Gastrocnemius medialis (tissue), 4 donors: ENCODE measurements at regions of chr1 and their contacts with region 1.

Region 1: GRCh38 chr1:202501281-202501680 is 152.8 kb downstream of the PPP1R12B start:
- DNase-seq: no peak
- ATAC-seq: no peak
- H3K4me3 ChIP-seq: no peak overlapping the region
- H3K27ac ChIP-seq: no peak overlapping the region
- H3K4me1 ChIP-seq: peaks cover 12 to 16% of the 10 kb centered on the region in 2 donors
- H3K27me3 ChIP-seq: no peaks in the 10 kb centered on the region
- CTCF ChIP-seq: peak; percentile 31 to 50 (median 42)
- POLR2A ChIP-seq: no peak

Region 2: DNA sequence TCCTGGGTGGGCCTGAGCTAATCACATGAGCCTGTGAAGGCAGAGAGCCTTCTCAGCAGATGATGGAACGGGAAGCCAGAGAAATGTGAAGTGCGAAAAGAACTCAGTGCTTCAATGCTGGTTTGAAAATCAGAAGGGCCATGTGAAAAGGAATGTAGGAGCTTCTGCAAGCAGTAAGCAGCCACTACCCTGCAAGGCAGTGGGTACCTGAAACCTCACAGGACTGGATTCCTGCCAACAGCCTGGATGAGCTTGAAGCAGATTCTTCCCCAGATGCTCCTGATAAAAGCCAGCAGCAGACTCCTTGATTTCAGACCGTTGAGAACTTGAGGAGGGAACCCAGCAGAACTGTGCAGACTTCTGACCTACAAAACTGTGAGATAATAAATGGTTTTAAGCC is 50.4 kb after region 1 on chr1:
- in situ Hi-C with region 1: no loop called
- intact Hi-C with region 1: no loop called
- DNase-seq: no peak
- ATAC-seq: no peak
- H3K4me3 ChIP-seq: no peak overlapping the region
- H3K27ac ChIP-seq: peak overlapping the region in 3 of 4 donors; percentile 5 to 15 (median 10)
- H3K4me1 ChIP-seq: peaks cover 24 to 48% of the 10 kb centered on the region in 2 donors
- H3K27me3 ChIP-seq: no peaks in the 10 kb centered on the region
- CTCF ChIP-seq: no peak
- POLR2A ChIP-seq: no peak

Region 3: GRCh38 chr1:202571347-202572339 is 70.4 kb after region 1 on chr1:
- in situ Hi-C with region 1: no loop called
- intact Hi-C with region 1: loop called (anchors 5 kb)
- DNase-seq: no peak
- ATAC-seq: peak in 1 of 2 donors; percentile 17
- H3K4me3 ChIP-seq: no peak overlapping the region
- H3K27ac ChIP-seq: peak overlapping the region in 2 of 4 donors; percentile 2 to 6
- H3K4me1 ChIP-seq: peaks cover 21 to 55% of the 10 kb centered on the region in 2 donors
- H3K27me3 ChIP-seq: no peaks in the 10 kb centered on the region
- CTCF ChIP-seq: peak; percentile 33 to 70 (median 58)
- POLR2A ChIP-seq: no peak

Region 4: DNA sequence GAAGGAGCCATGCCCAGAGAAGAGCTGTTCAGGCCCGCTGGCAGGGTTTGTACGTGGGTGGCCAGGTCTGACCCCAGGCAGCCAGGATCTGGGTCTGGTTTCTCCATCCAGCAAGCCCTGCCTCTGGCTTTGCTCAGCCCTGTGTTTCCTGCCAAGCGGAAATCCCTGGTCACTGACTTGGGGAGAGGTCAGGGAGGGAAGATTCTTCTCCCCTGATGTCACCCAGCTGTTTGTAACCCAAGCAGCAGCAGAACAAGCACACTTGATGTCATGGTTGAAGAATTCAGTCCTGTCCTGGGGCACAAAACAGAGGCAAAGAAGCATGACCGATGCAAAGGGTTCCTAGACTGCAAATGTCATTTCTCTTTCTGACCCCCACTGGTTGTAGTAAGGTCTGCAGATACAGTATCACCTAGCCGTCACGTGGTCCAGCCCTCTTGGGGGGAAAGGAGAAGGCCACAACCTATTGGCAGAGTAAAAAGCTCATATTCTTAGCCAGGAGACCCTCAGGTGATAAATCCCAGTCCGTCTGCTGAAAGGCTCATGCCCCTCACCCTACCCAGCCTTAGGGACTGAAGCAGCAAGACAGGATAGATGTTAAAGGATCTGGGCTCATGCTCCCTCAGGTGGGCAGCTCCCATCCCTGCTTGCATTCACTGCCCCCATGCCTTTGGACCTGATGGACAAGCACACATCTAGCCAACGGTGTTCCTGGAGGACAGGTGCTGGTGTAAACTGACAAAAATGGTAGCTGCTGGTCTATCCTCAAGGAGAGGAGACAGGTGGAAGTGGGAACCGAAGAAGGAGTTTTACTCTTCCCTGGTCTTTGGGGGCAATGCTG is 88.1 kb after region 1 on chr1:
- in situ Hi-C with region 1: loop called in 2 of 4 experiments (anchors 10 kb)
- intact Hi-C with region 1: loop called (anchors 2 kb)
- DNase-seq: peak; percentile 90 to 95
- ATAC-seq: peak; percentile 95 to 96
- H3K4me3 ChIP-seq: no peak overlapping the region
- H3K27ac ChIP-seq: peak overlapping the region; percentile 77 to 90 (median 82)
- H3K4me1 ChIP-seq: peaks cover 70 to 71% of the 10 kb centered on the region in 2 donors
- H3K27me3 ChIP-seq: no peaks in the 10 kb centered on the region
- CTCF ChIP-seq: no peak
- POLR2A ChIP-seq: no peak

Region 5: DNA sequence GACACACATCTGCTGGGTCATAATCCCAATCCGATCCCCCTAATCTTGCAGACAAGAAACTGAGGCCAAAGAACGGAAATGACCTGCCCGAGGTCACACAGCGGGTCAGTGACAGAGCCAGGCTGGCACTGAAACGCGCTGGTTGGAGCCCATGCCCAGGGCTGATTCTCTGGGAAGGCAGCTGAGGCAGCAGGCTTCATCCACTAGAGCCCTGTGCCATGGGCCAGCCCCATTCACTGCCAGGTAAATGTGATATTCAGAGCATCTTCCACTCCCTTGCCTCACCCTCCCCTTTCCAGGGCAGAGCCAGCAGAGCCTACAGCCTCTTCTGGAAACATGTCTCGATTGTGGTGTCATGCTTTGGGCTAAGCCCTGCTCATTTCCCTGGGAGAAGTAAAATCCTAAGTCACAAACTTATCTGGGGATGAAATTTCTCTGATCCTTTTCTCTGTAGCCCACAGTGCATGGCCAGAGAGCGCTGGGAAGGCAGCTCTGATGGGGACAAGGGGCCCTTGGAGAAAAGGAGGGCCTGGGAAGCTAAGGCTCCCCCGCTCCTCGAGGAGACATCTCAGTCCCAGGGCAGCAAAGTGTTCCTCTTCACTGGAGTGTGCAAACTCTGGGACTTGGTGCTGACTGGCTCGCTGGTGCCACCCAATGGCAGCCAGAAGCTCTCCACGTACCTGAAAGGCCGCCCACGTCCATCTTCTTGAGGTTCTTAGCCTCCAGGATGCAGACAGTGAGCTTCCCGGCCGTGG is 98.6 kb after region 1 on chr1:
- in situ Hi-C with region 1: loop called in 2 of 4 experiments (anchors 10 kb)
- intact Hi-C with region 1: no loop called
- DNase-seq: peak; percentile 37 to 42
- ATAC-seq: peak; percentile 57 to 71
- H3K4me3 ChIP-seq: no peak overlapping the region
- H3K27ac ChIP-seq: no peak overlapping the region
- H3K4me1 ChIP-seq: peaks cover 0 to 3% of the 10 kb centered on the region in 2 donors
- H3K27me3 ChIP-seq: no peaks in the 10 kb centered on the region
- CTCF ChIP-seq: peak in 4 of 5 experiments; percentile 32 to 71 (median 59)
- POLR2A ChIP-seq: no peak

Region 6: DNA sequence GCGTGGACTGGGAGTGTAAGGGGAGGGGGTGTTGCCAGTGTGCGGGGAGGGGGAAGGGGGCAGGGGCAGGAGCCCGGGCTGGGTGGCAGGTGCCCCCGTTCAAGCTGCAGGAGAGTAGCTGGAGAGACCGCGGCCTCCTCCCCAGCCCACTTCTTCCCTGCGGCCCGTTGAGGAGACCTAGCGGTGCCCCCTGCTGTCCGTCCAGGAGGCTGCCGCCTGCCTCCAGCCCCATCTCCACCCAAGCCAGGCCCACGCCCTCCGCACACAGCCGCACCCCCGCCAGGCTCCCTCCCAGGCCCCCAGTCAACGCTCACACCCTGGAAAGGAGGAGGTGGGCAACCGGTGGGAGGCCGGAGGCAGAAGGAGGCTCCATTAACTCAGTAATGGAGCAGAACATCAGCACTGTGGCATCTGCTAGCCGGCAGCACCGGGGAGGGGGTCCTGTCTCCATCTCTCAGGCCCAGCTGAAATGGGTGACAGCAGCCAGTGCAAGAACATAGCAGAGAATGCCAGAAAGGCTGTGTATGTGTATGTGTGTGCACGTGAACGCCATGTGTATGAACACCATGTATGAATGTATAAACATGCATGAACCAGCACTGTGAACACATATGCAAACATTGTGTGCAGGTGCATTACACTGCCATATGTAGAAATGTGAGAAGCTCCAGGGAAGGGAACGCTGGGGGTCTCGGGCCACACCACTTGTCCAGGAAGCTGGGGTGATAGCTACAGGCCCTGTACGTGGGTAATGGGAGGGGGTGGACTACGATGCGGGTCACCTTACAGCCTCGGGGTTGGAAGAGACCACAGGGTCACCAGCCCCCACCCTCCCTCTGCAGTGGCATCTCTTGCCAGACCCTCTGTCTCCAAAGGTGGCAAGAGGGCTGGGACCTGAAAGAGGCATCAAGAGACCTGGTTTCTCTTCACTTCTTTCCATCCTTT is 124.4 kb after region 1 on chr1:
- in situ Hi-C with region 1: no loop called
- intact Hi-C with region 1: loop called (anchors 5 kb)
- DNase-seq: peak; percentile 45 to 61
- ATAC-seq: peak; percentile 22 to 67
- H3K4me3 ChIP-seq: no peak overlapping the region
- H3K27ac ChIP-seq: no peak overlapping the region
- H3K4me1 ChIP-seq: peaks cover 22 to 34% of the 10 kb centered on the region in 2 donors
- H3K27me3 ChIP-seq: peaks cover 0 to 4% (median 3%) of the 10 kb centered on the region in 3 donors
- CTCF ChIP-seq: peak; percentile 60 to 78 (median 69)
- POLR2A ChIP-seq: no peak

Region 7: GRCh38 chr1:202750758-202751157 is 249.5 kb after region 1 on chr1:
- in situ Hi-C with region 1: no loop called
- intact Hi-C with region 1: no loop called
- DNase-seq: no peak
- ATAC-seq: no peak
- H3K4me3 ChIP-seq: no peak overlapping the region
- H3K27ac ChIP-seq: no peak overlapping the region
- H3K4me1 ChIP-seq: no peaks in the 10 kb centered on the region
- H3K27me3 ChIP-seq: no peaks in the 10 kb centered on the region
- CTCF ChIP-seq: no peak
- POLR2A ChIP-seq: no peak